K562 (cell line): ENCODE measurements at regions of chr2 and their contacts with region 1.

Region 1: DNA sequence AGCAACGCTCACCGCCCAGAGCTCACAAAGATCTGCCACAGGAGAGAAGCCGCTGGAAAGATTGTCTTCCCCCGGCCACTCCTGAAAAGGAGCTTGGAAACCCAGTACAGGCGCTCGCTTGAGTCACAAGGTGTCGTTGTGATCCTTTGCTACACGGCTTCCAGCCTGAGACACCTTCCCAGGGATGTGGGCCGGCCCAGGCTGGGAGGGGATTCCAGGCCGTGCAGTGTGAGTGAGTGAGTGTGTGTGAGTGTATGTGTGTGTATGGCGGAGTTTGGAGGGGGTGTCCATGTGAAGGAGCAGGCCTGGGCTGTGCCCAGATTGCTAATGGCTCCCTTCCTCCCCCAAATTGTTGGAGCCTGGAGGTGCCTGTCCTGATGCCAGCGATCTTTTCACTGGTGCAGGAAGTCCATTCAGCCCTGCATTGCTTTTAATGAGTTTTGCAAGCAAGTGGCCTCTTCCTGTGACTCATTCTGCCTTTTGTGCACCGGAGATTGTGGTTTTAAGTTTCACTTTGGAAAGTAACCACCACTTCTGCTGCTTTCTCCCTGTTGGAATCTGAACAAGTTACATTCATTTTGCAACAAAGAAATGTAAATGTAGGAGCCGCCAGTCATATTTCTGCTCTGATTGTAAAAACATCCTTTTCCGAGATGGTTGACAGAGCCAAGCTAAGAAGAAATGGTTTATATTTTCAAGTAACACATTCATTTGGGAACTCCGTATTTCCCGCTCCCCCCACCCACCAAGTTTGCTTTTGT is 83.7 kb downstream of the LPIN1 start:
- DNase-seq: peak; percentile 74 to 88 (median 80)
- ATAC-seq: peak; percentile 96
- H3K4me3 ChIP-seq: peak overlapping the region; percentile 31
- H3K27ac ChIP-seq: peak overlapping the region; percentile 89
- H3K4me1 ChIP-seq: peaks cover 10 to 26% of the 10 kb centered on the region in 2 experiments
- H3K27me3 ChIP-seq: no peaks in the 10 kb centered on the region
- CTCF ChIP-seq: peak; percentile 68 to 81 (median 71)
- EP300 ChIP-seq: peak; percentile 77
- POLR2A ChIP-seq: peak; percentile 56
- RAD21 ChIP-seq: peak; percentile 92

Region 2: DNA sequence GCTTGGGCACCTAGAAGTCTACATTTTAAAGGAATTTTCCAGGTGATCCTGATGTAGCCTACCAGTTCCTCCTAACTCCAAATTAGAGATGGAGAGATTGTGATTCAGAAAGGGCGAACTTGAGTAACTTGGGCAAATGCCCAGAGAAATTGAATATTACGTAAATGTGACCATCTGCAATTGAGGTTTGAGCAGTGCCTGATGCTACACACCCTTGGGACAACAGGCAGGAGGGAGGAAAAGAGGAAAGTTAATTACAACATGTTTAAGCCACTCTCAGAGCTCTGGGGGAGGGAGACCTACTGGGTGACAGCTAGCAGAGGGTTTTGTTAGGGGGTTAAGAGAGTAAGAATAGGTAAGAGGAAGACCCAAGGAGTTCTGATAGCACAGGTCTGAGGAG is 125.2 kb after region 1 on chr2:
- CTCF ChIA-PET with region 1: interaction called, 5 read pairs
- POLR2A ChIA-PET with region 1: no interaction called
- in situ Hi-C with region 1: no loop called
- intact Hi-C with region 1: loop called (anchors 1 kb)
- DNase-seq: no peak
- ATAC-seq: no peak
- H3K4me3 ChIP-seq: no peak overlapping the region
- H3K27ac ChIP-seq: no peak overlapping the region
- H3K4me1 ChIP-seq: no peaks in the 10 kb centered on the region; a peak in 3 of 5 replicates
- H3K27me3 ChIP-seq: no peaks in the 10 kb centered on the region
- CTCF ChIP-seq: no peak
- EP300 ChIP-seq: no peak
- POLR2A ChIP-seq: no peak
- RAD21 ChIP-seq: no peak

Region 3: DNA sequence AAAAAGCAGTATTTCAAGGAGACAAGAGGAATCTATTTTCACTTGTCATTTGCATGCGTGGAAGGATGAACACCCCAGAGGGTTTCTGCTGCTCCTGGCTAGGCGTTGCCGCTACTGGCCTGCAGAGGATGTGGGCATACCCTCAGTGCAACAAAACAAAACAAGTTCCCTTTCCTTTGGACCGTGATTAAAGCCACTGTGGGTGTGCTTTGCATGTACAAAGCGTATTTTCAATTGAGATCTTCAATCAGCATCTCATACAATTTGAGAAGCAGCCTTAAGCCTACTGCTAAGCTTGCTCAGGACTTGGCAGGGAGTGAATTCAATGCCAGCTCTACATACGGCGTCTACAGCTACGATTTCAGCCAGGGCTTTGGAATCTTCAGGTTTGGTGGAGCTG is 214.7 kb after region 1 on chr2:
- CTCF ChIA-PET with region 1: no interaction called
- POLR2A ChIA-PET with region 1: interaction called, 3 read pairs
- in situ Hi-C with region 1: no loop called
- intact Hi-C with region 1: loop called (anchors 5 kb)
- DNase-seq: no peak
- ATAC-seq: no peak
- H3K4me3 ChIP-seq: no peak overlapping the region
- H3K27ac ChIP-seq: no peak overlapping the region
- H3K4me1 ChIP-seq: no peaks in the 10 kb centered on the region
- H3K27me3 ChIP-seq: no peaks in the 10 kb centered on the region
- CTCF ChIP-seq: no peak
- EP300 ChIP-seq: no peak
- POLR2A ChIP-seq: no peak
- RAD21 ChIP-seq: no peak

Region 4: GRCh38 chr2:12282780-12283695 is 452.9 kb after region 1 on chr2:
- CTCF ChIA-PET with region 1: no interaction called
- POLR2A ChIA-PET with region 1: interaction called, 3 read pairs
- in situ Hi-C with region 1: no loop called
- intact Hi-C with region 1: loop called (anchors 10 kb)
- DNase-seq: no peak
- ATAC-seq: 0 out of 3 replicates have a peak, but pooled peaks have one; percentile 6
- H3K4me3 ChIP-seq: no peak overlapping the region
- H3K27ac ChIP-seq: peak overlapping the region; percentile 46
- H3K4me1 ChIP-seq: peaks cover 0 to 17% of the 10 kb centered on the region in 2 experiments; a peak in 3 of 5 replicates
- H3K27me3 ChIP-seq: no peaks in the 10 kb centered on the region
- CTCF ChIP-seq: no peak
- EP300 ChIP-seq: no peak
- POLR2A ChIP-seq: no peak
- RAD21 ChIP-seq: no peak

Region 5: DNA sequence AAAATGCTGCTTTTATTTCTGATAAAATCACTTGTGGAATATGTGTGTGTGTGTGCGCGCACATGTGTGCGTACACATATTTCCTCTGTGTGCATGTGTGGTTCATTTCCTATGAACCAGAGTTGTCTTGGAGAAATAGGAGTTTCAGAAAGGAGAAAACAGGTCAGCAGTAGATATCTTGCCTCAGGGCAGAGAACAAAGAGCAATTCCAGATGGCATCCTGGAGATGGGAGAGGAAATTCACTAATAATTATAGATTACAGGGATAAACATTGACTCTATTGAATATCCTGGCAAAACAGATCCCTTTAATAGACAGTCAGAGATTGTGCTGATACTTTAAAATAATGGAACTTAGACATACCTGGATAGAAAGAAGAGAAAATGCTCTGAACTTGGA is 1184.7 kb after region 1 on chr2:
- CTCF ChIA-PET with region 1: no interaction called
- POLR2A ChIA-PET with region 1: no interaction called
- in situ Hi-C with region 1: loop called (anchors 5 kb)
- intact Hi-C with region 1: no loop called
- DNase-seq: no peak
- ATAC-seq: no peak
- H3K4me3 ChIP-seq: no peak overlapping the region
- H3K27ac ChIP-seq: no peak overlapping the region
- H3K4me1 ChIP-seq: peaks cover 0 to 14% of the 10 kb centered on the region in 2 experiments; a peak in 3 of 5 replicates
- H3K27me3 ChIP-seq: 0 out of 5 replicates have a peak, but pooled peaks cover 0 to 3% of the 10 kb centered on the region in 2 experiments
- CTCF ChIP-seq: no peak
- EP300 ChIP-seq: no peak
- POLR2A ChIP-seq: no peak
- RAD21 ChIP-seq: no peak